ENCODE measurements at regions of chr19 and their contacts with region 1.

Region 1: DNA sequence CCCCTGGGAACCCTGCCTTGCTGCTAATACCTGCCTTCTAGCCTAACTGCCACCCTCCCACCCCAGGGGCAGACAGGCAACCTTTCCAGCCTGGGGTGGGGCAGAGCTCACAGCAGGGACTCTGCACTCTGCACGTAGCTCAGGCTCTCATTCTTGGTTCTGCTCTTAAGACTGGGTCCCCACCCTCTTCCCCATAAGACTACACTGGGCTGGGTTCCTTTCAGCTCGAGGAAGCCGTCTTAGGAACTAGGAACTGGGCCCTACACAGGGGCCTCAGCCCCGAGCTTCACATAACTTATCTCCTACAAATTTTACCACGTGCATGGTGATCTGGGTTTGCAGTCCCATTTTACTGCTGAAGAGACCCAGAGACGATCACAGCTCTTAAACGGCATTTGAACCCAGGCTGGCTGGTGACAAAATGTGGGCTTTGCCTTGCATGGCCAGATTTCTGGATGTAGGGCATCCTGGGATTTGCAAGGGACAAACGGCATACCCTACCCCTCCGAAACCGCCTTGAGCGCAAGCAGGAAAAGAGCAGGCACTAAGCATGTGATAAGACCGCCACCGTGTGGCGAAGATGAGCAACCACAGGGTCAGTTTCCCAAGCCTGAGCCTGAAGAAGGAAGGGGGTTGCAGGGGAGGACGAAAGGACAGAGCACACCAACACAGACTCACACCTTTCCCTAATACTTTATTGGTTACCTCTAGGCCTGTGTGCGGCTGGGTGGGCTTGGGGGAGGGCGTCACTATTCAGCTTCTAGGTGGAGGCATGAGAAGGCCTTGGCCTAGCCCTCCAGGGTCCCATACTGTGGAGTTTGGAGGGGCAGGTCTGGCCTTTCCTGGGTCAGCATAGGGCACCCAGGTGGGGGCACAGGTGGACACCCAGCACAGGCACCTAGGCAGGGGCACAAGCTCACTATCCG is 5.1 kb downstream of the JUNB start:
- DNase-seq: peak; percentile 84
- H3K4me3 Mint-ChIP-seq: peak overlapping the region; percentile 67
- H3K27ac Mint-ChIP-seq: peak overlapping the region; percentile 74
- H3K4me1 Mint-ChIP-seq: peaks cover 40% of the 10 kb centered on the region
- H3K27me3 Mint-ChIP-seq: no peaks in the 10 kb centered on the region

Region 2: DNA sequence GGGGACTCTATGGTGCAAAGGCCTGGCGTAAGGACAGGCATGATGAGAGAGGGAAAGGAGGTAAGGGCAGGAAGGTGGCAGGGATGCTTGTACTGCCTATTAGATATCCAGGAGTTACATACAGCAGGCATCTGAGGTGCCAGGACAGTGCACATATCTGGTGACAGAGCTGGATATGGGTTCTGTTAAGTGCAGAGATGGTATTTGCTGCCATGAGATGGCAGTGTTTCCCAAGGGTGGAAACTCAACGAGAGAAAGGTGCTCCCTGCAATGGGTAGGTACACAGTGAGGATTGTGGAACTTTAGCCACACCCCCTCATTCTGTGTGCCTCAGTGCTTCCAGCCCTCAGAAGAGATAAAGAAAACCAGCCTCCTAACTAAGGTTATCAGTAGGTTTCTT is 79.5 kb before region 1 on chr19:
- CTCF ChIA-PET with region 1: interaction called, 7 read pairs
- intact Hi-C with region 1: loop called (anchors 1 kb)
- DNase-seq: peak; percentile 55
- H3K4me3 Mint-ChIP-seq: no peak overlapping the region
- H3K27ac Mint-ChIP-seq: peak overlapping the region; percentile 47
- H3K4me1 Mint-ChIP-seq: peaks cover 26% of the 10 kb centered on the region
- H3K27me3 Mint-ChIP-seq: no peaks in the 10 kb centered on the region

Region 3: GRCh38 chr19:12847159-12848139 is 51.0 kb after region 1 on chr19:
- CTCF ChIA-PET with region 1: interaction called, 10 read pairs
- intact Hi-C with region 1: loop called (anchors 2 kb)
- DNase-seq: peak; percentile 87
- H3K4me3 Mint-ChIP-seq: peak overlapping the region; percentile 36
- H3K27ac Mint-ChIP-seq: no peak overlapping the region
- H3K4me1 Mint-ChIP-seq: peaks cover 3% of the 10 kb centered on the region
- H3K27me3 Mint-ChIP-seq: peaks cover 21% of the 10 kb centered on the region

Measured in activated naive CD4-positive, alpha-beta T cell treated with anti-CD3 and anti-CD28 coated beads for 36 hours (primary cell).